Heart right ventricle (tissue), 16 donors: ENCODE measurements at regions of chr11 and their contacts with region 1.

Region 1: DNA sequence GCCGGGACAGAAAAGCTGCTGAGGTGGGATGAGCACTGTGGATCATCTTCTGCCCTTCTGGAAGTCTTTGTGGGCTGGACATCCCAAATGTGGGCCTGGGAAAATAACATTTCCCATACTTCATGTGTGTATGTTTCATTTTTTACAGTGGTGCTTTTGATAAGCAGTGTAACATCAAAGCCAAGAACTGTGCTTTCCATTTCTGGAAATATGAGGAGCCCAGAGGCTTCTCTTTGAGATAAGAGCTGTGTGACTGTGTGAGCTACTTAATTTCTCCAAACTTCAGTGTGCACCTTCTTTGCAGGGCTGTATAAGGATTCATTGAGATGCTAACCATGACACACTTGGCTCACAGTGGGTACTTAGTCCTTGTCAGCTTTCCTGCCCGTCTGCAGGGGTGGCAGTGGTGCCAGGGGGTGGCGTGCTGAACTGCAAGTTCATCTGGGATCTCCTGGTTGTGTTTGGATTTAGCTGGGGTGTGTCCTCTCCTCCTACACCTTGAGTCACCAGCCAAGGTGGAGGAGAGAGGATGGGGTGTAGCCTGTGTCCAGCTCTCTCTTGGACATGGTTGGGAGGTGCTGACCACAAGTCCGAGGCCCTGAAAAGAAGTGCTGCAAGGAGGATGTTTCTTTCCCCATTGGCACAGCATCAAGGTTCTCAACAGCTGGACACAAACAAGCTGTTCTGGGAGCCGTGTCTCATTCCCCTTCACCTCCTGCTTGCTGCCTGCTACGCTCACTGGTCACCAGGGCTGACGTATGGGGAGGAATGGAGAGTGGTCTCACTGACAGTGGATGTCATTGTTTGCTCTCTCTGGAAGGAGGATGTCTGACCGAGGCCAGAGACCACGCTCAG is 139.4 kb downstream of the TEAD1 start:
- DNase-seq: peak in 1 of 2 donors; percentile 24
- ATAC-seq: peak; percentile 12 to 50 (median 32)
- H3K4me3 ChIP-seq: no peak overlapping the region
- H3K27ac ChIP-seq: peak overlapping the region in 8 of 10 donors; percentile 10 to 78 (median 54)
- H3K4me1 ChIP-seq: peaks cover 15 to 77% (median 60%) of the 10 kb centered on the region in 9 donors
- H3K27me3 ChIP-seq: no peaks in the 10 kb centered on the region
- CTCF ChIP-seq: peak in 1 of 9 donors; percentile 13

Region 2: GRCh38 chr11:12680246-12680939 is 133.2 kb before region 1 on chr11:
- intact Hi-C with region 1: loop called in 4 of 10 experiments (anchors 5 to 10 kb)
- DNase-seq: peak; percentile 82
- ATAC-seq: peak; percentile 82 to 92 (median 87)
- H3K4me3 ChIP-seq: peak overlapping the region in 4 of 10 donors; percentile 16 to 25 (median 22)
- H3K27ac ChIP-seq: peak overlapping the region in 7 of 10 donors; percentile 28 to 60 (median 37)
- H3K4me1 ChIP-seq: peaks cover 0 to 84% (median 64%) of the 10 kb centered on the region in 9 donors
- H3K27me3 ChIP-seq: peaks cover 0 to 62% (median 0%) of the 10 kb centered on the region in 7 donors
- CTCF ChIP-seq: no peak

Region 3: GRCh38 chr11:12693479-12694181 is 120.0 kb before region 1 on chr11:
- intact Hi-C with region 1: loop called in 1 of 10 experiments (anchors 5 kb)
- DNase-seq: peak in 1 of 2 donors; percentile 68
- ATAC-seq: peak; percentile 73 to 92 (median 82)
- H3K4me3 ChIP-seq: peak overlapping the region in 6 of 10 donors; percentile 4 to 35 (median 22)
- H3K27ac ChIP-seq: peak overlapping the region; percentile 86 to 95 (median 89)
- H3K4me1 ChIP-seq: peaks cover 33 to 84% (median 71%) of the 10 kb centered on the region in 9 donors
- H3K27me3 ChIP-seq: peaks cover 0 to 46% (median 0%) of the 10 kb centered on the region in 7 donors
- CTCF ChIP-seq: peak in 1 of 9 donors; percentile 5

Region 4: GRCh38 chr11:13297917-13298356 is 484.3 kb after region 1 on chr11:
- intact Hi-C with region 1: no loop called
- DNase-seq: no peak
- ATAC-seq: peak; percentile 9 to 58 (median 50)
- H3K4me3 ChIP-seq: no peak overlapping the region
- H3K27ac ChIP-seq: peak overlapping the region in 1 of 10 donors; percentile 37
- H3K4me1 ChIP-seq: peaks cover 8 to 62% (median 46%) of the 10 kb centered on the region in 9 donors
- H3K27me3 ChIP-seq: no peaks in the 10 kb centered on the region
- CTCF ChIP-seq: no peak